CD8-positive, alpha-beta memory T cell (primary cell): ENCODE measurements at regions of chr11 and their contacts with region 1.

Region 1: GRCh38 chr11:9448576-9449352 is 12.0 kb upstream of the ZNF143 start:
- DNase-seq: no peak
- H3K4me3 ChIP-seq: no peak overlapping the region
- H3K4me3 Mint-ChIP-seq: no peak overlapping the region
- H3K27ac ChIP-seq: no peak overlapping the region
- H3K27ac Mint-ChIP-seq: no peak overlapping the region
- H3K4me1 ChIP-seq: no peaks in the 10 kb centered on the region
- H3K4me1 Mint-ChIP-seq: peaks cover 0 to 13% (median 12%) of the 10 kb centered on the region in 3 donors
- H3K27me3 ChIP-seq: no peaks in the 10 kb centered on the region
- H3K27me3 Mint-ChIP-seq: no peaks in the 10 kb centered on the region

Region 2: DNA sequence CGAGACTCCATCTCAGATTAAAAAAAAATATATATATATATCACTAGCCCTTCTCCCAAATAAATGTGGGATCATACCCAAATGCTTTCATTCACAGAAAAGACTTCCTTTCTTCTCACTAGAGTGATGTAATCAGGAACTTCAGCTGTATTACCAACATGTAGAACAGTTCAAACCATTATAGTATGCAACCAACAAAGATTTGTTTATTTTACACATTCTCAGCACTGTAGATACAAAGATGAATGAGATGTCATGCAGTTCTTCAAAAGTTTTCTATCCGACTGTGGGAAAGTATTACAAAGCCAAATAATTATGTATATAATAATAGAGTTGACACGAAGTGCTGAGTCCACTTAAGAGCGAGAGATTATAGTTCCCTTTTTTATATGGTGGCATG is 10.2 kb before region 1 on chr11:
- CTCF ChIA-PET with region 1: interaction called, 3 read pairs
- POLR2A ChIA-PET with region 1: interaction called, 10 read pairs
- DNase-seq: no peak
- H3K4me3 ChIP-seq: no peak overlapping the region
- H3K4me3 Mint-ChIP-seq: no peak overlapping the region
- H3K27ac ChIP-seq: no peak overlapping the region
- H3K27ac Mint-ChIP-seq: no peak overlapping the region
- H3K4me1 ChIP-seq: no peaks in the 10 kb centered on the region
- H3K4me1 Mint-ChIP-seq: peaks cover 0 to 2% (median 0%) of the 10 kb centered on the region in 3 donors
- H3K27me3 ChIP-seq: no peaks in the 10 kb centered on the region
- H3K27me3 Mint-ChIP-seq: no peaks in the 10 kb centered on the region

Region 3: DNA sequence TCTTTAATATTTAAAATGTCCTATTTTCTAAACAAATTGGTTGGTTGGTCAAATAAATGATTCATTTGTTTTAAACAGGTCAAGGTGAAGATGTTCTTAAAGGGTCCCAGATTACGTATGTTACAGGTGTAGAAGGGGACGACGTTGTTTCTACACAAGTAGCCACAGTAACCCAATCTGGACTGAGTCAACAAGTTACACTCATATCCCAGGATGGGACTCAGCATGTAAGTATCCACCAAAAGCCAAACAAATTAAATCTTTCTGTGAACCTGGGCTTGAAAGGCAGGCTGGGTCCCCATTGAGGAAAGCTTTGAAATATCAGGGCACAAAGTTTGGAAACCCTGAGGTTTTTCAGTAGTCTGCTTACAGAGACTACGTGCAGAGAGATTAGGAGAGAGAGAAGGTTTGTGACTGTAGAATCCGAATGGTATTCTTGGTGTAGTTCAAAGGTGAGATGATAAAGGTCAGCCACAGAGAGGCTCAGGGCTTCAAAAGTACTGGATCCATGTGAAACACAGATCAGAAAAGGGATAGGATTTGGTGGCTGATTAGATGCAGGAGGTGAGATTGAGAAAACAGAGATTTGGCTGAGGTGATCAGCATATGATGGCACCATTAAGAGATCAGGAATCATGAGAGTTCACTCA is 63.7 kb after region 1 on chr11:
- CTCF ChIA-PET with region 1: no interaction called
- POLR2A ChIA-PET with region 1: no interaction called
- DNase-seq: no peak
- H3K4me3 ChIP-seq: no peak overlapping the region
- H3K4me3 Mint-ChIP-seq: no peak overlapping the region
- H3K27ac ChIP-seq: no peak overlapping the region
- H3K27ac Mint-ChIP-seq: peak overlapping the region in 1 of 8 donors; percentile 14
- H3K4me1 ChIP-seq: no peaks in the 10 kb centered on the region
- H3K4me1 Mint-ChIP-seq: peaks cover 11 to 16% (median 13%) of the 10 kb centered on the region in 3 donors
- H3K27me3 ChIP-seq: no peaks in the 10 kb centered on the region
- H3K27me3 Mint-ChIP-seq: no peaks in the 10 kb centered on the region